Vagina (tissue), 2 donors: ENCODE measurements at regions of chr22 and their contacts with region 1.

Region 1: DNA sequence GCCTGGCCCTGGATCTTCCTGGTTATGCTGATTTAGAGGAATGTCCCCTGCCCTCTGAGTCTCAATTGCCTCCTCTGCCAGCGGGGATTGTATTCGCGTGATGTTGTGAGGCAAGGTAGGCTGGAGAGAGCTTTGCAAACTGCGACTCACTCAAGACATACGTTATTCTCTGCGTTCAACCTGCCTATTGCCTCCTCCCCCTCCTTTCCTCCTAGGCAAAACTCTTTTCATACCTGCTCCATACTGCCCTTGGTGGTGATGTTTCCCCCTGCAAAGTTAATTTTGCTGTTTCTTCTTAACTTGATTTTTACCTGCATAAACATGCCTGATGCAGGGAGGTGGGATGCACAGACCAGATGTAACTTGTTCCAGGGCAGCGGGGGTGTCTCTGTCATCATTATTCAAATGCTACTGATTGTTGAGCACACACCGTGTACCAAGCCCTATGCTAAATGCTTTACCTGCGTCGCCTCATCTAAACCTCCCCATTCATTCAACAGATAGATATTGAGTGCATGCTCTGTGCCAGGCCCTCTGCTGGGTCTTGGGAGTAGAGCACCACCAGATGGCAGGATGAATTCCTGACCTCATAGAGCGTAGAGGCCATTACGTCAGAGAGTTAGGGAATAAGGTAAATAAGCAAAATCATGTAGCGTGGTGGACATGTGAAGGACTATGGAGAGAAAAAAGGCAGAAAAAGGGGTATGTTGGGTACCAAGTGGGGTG is 29.0 kb downstream of the SGSM1 start:
- DNase-seq: no peak
- H3K4me3 ChIP-seq: no peak overlapping the region
- H3K27ac ChIP-seq: no peak overlapping the region
- H3K4me1 ChIP-seq: no peaks in the 10 kb centered on the region
- H3K27me3 ChIP-seq: no peaks in the 10 kb centered on the region
- CTCF ChIP-seq: no peak
- POLR2A ChIP-seq: no peak

Region 2: DNA sequence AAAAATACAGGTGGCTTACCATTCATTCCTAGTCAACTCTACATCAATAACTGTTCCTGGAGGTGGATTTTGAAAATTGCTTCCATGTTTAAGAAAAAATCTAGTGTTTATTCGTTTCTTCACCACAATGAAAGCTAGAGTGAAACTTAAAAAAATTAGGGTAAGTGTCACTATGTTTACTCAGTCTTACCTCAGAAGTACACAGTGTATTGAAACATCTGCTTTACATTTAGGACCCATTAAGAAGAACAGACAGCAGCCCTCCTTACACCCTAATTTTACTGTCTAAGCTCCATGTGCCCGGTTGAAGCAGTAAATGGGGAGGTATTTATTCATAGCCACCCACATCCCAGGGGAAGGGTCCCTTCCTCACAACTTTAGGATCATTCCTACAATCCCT is 111.9 kb before region 1 on chr22:
- intact Hi-C with region 1: no loop called
- DNase-seq: no peak
- H3K4me3 ChIP-seq: no peak overlapping the region
- H3K27ac ChIP-seq: no peak overlapping the region
- H3K4me1 ChIP-seq: no peaks in the 10 kb centered on the region
- H3K27me3 ChIP-seq: no peaks in the 10 kb centered on the region
- CTCF ChIP-seq: no peak
- POLR2A ChIP-seq: no peak

Region 3: DNA sequence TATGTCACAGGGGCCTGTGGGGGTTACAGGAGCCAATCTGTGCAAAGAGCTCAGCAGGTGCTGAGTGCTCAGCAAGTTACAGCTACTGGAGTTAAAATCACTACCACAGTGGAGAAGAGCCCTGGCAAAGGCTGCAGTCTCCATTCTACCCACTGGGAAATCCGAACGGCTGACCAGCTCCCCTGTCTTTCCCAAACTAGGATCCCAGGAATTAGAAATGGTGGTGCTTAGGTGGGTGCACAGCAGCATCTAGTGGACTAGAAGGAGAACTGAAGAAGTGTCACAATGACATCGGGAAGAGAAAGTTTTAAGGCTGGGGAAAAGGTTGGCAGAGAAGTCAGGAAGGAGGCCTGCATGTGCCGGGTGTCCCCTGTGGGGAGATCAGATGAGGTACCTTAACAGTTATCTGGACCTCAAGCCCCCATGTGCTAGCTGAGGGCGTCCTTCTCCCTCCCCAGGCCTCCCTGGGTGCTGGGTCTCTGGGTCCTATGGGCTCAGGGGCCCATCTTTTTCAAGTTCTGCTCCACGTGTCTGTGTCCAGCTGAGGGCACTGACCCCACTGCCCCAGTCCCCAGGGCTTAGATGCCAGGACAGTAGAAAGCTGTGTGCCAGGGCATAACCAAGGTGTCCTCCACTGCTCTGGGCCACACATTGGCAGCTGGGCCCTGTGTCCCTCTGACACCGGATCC is 62.4 kb before region 1 on chr22:
- intact Hi-C with region 1: loop called (anchors 10 kb)
- DNase-seq: no peak
- H3K4me3 ChIP-seq: no peak overlapping the region
- H3K27ac ChIP-seq: no peak overlapping the region
- H3K4me1 ChIP-seq: peaks cover 9% of the 10 kb centered on the region
- H3K27me3 ChIP-seq: no peaks in the 10 kb centered on the region
- CTCF ChIP-seq: no peak
- POLR2A ChIP-seq: no peak